Head of caudate nucleus (tissue), 42 donors: ENCODE measurements at regions of chr11 and their contacts with region 1.

Region 1: DNA sequence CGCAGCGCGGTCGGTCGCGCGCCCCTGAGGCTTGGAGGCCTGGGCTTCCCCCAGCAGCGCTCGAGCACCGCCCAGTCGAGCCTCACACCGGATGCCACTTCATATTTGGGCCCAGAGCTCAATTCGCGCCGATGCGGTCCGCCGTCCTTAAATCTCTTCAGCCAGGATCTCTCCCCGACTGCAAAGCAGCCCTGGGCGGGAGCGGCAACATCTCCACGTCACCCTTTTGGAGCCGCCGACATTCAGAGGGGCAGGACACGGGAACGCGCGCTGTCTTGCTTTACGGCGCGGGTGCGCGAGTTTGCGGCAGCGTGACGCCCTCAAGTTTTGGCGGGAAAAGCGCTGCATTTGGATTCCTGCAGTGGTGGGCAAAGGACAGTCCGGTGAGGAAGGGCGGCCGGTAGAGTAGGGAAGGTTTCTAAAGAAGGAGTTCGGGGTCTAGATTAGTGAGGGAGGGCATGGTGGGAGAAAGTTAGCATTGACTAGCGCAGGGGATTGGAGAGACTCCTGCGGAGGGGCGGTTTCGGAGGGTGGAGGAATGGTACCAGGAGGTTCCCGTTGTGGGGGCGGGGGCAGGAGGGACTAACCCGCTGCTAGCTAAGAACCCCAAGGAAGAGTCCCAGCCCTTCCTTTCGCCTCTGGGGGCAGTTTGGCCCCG is 796 bp downstream of the CHEK1 start:
- DNase-seq: peak; percentile 83 to 96 (median 91)

Region 2: GRCh38 chr11:125592305-125593112 is 33.2 kb before region 1 on chr11 and contains the start of gene STT3A:
- intact Hi-C with region 1: loop called (anchors 5 kb)
- DNase-seq: peak; percentile 96 to 100 (median 100)

Region 3: GRCh38 chr11:125887373-125888324 is 261.9 kb after region 1 on chr11 and contains the start of gene HYLS1:
- intact Hi-C with region 1: loop called (anchors 10 kb)
- DNase-seq: peak; percentile 88 to 98 (median 95)

Region 4: DNA sequence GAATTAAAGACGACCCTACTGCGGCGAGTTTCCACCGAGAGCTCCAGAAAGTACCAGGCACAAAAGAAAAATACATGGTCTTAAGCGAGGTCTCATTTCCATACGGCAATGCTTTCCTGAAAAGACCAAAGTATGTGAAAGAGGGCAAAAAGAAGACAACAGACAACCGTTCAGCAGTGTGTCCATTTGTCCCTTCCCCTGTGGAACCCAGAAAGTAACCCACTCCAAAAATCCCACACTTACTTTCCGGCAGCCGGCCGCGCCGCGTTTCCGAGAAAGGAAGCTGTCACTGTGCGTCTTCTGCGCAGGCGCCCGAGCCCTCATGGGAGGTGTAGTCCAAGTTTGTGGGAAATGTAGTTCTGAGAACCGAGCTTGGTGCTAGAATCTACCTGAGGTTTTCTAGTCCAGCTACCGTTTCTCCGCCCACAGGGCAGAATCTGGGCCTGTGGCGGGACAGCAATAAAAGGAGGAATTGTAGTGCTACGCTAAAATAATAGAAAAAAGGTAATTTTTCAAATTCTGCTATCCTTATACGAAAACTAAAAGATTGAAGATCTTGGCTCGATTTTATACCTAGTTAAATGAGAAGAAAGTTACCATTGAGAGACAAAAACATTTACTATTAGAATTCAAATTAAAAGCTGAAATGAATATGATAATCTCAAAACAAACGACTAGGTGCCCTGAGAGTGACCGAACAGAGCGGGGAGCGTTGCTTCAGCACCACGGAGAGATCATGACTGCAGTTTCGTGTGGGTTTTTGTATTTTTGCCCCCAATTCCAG is 277.4 kb after region 1 on chr11 and contains the start of gene PUS3:
- intact Hi-C with region 1: no loop called
- DNase-seq: peak; percentile 86 to 97 (median 93)